ENCODE measurements at regions of chr2 and their contacts with region 1.

Region 1: DNA sequence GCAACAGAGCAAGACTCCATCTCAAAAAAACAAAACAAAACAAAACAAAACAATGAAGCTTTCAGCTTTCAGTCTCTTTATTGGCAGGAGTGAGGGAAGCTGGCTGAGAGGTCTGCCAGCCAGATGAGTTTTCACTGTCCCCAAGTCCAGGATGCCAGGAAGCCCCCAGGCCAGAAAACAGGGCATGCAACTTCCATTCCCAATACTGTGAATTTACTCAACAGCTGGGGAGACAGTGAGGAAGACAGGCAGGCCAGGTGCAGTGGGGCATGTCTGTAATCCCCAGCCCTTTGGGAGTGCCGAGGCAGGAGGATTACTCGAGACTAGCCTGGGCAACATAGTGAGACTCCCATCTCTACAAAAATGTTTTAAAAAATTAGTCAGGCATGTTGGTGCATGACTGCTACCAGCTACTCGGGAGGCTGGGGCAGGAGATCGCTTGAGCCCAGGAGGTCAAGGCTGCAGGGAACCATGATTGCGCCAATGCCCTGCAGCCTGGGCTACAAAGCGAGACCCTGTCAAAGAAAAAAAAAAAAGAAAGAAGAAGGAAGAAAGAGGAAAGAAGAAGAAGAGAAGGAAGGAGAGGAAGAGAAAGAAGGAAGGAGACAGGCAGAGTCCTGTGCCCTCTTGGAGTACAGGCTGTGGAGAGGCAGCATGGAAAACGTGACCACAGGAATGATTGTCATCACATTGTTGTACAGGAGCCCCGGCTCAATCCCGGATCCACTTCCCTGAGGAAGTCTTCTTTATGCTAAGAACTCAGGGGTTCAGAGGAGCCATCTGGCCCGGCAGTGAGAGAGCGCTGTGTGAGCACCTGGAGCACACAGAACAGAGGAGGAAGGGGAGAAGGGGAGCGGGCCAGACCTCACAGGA is 29.2 kb upstream of the POMC start:
- DNase-seq: no peak
- H3K4me3 ChIP-seq: no peak overlapping the region
- H3K27ac ChIP-seq: no peak overlapping the region
- H3K4me1 ChIP-seq: no peaks in the 10 kb centered on the region
- H3K27me3 ChIP-seq: no peaks in the 10 kb centered on the region
- CTCF ChIP-seq: no peak

Region 2: DNA sequence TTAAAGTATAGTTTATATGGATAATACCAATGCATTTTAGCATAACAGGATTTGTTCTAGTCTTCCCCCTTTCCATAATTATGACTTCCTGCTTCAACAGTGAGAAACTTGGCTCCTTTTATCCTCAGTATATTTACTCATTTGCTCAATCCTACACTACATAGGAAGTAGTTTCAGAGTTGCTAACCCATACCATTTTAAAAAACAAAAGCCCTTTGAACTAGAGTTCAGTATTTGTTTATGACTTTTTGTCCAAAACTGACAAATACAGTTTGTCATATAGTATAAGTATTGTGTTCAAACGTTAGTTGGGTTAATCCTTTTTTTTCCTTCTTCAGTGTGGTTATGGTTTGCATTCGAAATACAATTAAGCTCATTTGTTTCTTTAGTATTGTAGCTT is 219.9 kb before region 1 on chr2:
- intact Hi-C with region 1: loop called (anchors 5 kb)
- DNase-seq: no peak
- H3K4me3 ChIP-seq: no peak overlapping the region
- H3K27ac ChIP-seq: no peak overlapping the region
- H3K4me1 ChIP-seq: no peaks in the 10 kb centered on the region
- H3K27me3 ChIP-seq: no peaks in the 10 kb centered on the region
- CTCF ChIP-seq: no peak

Region 3: DNA sequence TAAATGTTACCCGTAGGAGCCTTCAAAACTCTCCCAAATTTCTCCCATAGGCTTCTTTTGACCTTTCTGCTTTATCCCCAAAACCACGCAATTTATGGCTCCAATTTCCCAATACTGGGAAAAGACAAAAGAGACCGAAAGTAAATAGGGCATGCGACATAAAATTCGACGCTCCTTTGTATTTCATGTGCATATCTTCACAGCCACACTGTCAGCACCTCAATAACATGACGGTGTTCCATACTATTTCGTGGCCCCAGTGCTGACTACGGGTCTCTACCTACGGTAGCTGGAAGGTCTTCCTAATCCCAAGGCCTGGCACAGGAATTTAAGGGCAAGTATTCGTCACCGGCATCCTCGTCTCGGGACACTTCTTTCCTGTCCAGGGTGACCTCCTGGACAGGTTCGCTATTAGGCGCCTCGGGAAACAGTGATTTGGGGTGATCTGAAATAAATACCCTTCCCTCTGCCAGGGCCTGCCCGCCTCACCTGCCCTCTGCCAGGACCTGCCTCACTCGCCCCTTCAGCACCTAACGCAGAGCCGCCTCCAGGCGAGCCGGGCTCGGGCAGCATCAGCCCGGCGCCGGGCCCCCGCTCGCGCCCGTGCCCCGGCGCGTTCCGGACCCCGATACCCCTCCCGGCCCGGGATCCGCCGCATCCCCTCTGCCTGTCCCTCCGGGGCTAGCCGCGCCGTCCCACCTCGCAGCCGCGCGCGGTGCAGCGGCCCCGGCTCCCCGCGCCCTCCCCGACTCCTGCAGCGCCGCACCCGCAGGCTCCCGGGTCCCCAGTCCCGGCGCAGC is 475.1 kb after region 1 on chr2:
- intact Hi-C with region 1: no loop called
- DNase-seq: peak; percentile 53
- H3K4me3 ChIP-seq: peak overlapping the region; percentile 72
- H3K27ac ChIP-seq: peak overlapping the region; percentile 58
- H3K4me1 ChIP-seq: peaks cover 4% of the 10 kb centered on the region
- H3K27me3 ChIP-seq: no peaks in the 10 kb centered on the region
- CTCF ChIP-seq: no peak